Cardiac septum (tissue), 1 donor: ENCODE measurements at regions of chr7 and their contacts with region 1.

Region 1: DNA sequence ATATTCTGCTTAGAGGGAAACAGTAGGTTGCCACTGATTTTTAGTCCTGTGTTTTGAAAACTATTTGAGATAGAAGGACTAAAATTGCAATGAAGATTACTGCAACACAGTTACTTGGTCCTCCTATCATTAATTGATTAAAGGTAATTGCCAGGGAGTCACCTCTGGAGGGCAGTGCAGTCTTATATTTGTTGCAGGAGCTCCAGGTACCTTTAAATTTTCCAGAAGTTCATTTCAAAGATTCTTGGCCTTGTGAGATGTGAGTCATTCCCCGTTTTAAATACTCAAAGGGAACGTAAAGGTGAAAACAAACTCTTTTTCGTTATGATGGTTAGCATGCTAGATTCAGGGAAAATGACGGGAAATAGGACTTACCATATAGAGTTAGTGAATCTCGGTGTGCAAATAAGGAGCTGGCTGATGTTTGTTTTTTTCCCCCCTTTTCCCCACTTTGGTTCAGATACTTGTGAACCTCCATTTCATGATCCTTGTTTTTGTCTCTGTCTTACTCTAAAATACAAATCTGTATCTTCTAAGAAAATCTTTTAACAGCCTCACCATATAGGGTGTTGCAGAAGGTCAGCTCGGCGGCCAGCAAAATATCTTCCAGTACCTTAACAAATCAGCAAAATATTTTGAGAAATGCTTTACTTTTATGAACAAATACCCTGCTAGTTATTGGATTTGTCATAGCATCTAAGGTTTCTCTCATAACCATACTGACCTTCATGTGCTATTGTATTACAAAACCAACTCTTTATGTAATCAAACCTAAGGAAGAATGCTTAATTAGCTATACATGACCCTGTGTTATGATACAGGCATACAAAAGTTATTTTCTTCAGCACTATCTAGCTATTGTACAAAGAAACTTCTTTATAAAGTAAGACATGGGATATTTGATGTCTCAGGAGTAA is 143.0 kb upstream of the HDAC9 start:
- DNase-seq: no peak

Region 2: GRCh38 chr7:18086165-18087030 is 266.2 kb before region 1 on chr7:
- intact Hi-C with region 1: no loop called
- DNase-seq: peak; percentile 79

Region 3: DNA sequence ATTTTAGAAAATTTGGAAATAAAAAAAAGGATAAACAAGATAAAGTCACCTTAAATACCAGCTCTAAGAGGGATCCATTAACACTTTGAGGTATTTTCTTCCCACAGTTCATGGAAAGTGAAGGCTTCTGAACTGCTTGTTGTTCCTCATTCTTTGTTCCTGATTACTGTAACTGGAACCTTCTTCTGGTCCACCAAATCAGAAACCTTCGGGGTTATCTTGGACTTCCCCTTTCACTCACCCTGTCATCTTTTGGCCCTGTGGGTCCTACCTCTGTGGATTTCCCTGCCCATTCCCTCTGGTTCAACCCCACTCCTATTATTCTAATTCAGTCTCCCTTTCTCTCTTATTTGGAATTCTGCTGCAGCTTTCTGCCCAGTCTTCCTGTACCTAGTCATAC is 208.4 kb before region 1 on chr7:
- intact Hi-C with region 1: no loop called
- DNase-seq: no peak

Region 4: DNA sequence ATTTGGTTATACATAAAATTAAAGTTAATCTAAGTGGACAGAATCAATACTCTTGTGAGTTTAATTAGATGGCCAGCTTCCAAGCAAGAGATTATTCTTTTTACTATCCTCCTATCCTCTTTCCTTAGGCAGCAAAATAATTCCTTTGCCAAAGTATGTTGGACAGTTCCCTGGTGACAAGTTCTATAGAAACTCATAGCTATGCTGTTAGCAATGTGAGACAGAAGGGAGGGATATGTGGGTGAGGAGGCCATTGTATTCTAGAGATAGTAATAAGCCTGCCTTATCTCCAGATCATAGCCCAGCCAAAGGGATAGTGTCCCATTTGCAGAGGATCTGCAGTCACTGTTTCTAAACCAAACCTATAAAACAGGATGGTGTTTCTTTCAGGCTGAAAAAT is 38.6 kb before region 1 on chr7:
- intact Hi-C with region 1: no loop called
- DNase-seq: no peak

Region 5: DNA sequence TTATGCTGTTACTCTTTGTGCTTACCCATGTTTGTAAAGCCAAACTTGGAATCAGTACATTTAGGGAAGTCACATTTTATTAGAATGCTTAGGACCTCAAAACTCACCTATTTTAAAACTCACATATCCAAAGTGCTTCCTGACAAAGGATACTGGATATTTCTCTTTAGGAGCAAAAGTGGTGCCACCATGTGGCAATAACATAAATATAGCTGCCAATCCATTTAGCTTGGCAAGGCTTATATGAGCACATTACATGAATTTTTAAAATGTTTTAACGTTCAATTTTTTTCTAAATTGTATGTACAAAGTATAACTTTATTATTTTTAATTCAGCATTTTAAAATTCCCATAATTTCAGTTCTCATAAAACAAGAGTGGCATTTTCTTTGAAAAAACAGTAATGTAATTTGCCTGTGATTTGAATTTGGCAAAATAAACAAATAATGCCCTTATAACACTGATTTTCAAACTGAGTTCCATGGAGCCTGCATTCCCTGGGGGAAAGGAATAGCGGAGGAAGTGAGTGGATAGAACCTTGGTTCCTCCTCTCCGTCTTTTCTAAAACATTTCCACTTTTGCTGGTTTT is 218.4 kb after region 1 on chr7:
- intact Hi-C with region 1: loop called (anchors 2 kb)
- DNase-seq: no peak

Region 6: DNA sequence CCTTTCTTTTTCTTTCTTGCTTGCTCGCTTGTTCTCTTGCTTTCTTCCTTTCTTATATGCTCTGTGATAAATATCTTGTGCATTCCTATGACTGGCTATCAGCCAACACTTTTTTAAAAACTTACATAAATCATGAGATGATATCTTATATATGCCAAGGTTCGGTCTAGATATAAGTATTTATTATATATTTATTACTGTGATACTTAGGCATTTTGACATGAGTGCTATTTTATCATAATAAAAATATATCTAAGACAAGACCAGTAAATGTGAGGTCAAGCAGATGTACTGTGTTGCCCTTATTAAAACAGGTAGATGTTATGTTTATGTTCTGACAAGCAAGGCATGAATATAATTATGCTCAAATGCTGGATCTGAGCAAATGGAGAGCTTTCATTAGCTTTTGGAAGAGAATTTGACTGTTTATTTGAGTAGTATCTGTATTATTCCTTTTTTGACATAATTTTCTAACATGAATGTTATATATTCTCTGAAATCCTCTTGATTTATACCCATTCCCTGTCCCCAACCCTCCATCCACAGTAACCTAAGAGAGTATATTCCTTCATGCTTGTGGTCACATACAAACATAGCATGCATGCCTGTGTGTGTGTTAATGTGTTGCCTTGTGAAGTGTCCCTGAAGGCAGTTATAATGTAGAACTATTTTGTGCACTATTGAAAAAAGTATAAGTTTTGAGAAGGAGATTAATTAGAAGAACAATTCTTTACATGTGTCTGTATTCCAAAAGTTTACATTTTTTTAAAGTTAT is 301.0 kb after region 1 on chr7:
- intact Hi-C with region 1: loop called (anchors 5 kb)
- DNase-seq: no peak